K562 (cell line): ENCODE measurements at regions of chr7 and their contacts with region 1.

Region 1: GRCh38 chr7:140673063-140673773 is 473 bp downstream of the ADCK2 start:
- DNase-seq: peak; percentile 62 to 77 (median 70)
- ATAC-seq: peak; percentile 79
- H3K4me3 ChIP-seq: peak overlapping the region; percentile 77
- H3K27ac ChIP-seq: peak overlapping the region; percentile 57; the same call in 2 of the 3 replicates
- H3K4me1 ChIP-seq: peaks cover 24 to 34% of the 10 kb centered on the region in 2 experiments; a peak in 4 of 5 replicates
- H3K27me3 ChIP-seq: no peaks in the 10 kb centered on the region
- CTCF ChIP-seq: no peak; a peak in 1 of 6 replicates
- EP300 ChIP-seq: no peak
- POLR2A ChIP-seq: peak; percentile 48; the same call in 1 of the 2 replicates
- RAD21 ChIP-seq: no peak

Region 2: GRCh38 chr7:140485500-140486265 is 187.5 kb before region 1 on chr7:
- CTCF ChIA-PET with region 1: no interaction called
- POLR2A ChIA-PET with region 1: no interaction called
- in situ Hi-C with region 1: no loop called
- intact Hi-C with region 1: no loop called
- DNase-seq: peak; percentile 59 to 63 (median 60)
- ATAC-seq: peak; percentile 10; the same call in 1 of the 3 replicates
- H3K4me3 ChIP-seq: no peak overlapping the region
- H3K27ac ChIP-seq: no peak overlapping the region
- H3K4me1 ChIP-seq: peaks cover 34 to 41% of the 10 kb centered on the region in 2 experiments
- H3K27me3 ChIP-seq: no peaks in the 10 kb centered on the region
- CTCF ChIP-seq: no peak
- EP300 ChIP-seq: no peak
- POLR2A ChIP-seq: no peak
- RAD21 ChIP-seq: no peak

Region 3: DNA sequence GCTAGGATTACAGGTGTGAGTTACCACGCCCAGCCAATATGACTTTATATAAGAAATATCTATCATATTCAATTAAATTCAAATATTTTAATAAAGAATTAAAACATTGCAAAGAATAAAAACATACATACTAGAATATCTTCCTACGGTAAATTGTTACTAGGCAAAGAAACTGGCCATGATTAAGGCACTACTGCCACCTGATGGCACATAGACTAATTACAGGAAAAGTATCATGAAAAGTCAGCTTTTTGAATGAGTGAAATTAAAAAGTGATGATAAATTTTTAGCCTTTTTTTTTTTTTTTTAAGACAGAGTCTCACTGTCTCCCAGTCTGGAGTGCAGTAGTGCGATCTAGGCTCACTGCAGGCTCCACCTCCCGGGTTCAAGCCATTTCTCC is 310.6 kb after region 1 on chr7:
- CTCF ChIA-PET with region 1: interaction called, 4 read pairs
- POLR2A ChIA-PET with region 1: no interaction called
- in situ Hi-C with region 1: no loop called
- intact Hi-C with region 1: loop called (anchors 10 kb)
- DNase-seq: peak; percentile 52 to 57 (median 54)
- ATAC-seq: no peak
- H3K4me3 ChIP-seq: no peak overlapping the region
- H3K27ac ChIP-seq: no peak overlapping the region
- H3K4me1 ChIP-seq: no peaks in the 10 kb centered on the region
- H3K27me3 ChIP-seq: 0 out of 5 replicates have a peak, but pooled peaks cover 3% of the 10 kb centered on the region in 2 experiments
- CTCF ChIP-seq: peak in 2 of 3 experiments; percentile 46 to 80; a peak in 4 of 6 replicates
- EP300 ChIP-seq: no peak
- POLR2A ChIP-seq: no peak
- RAD21 ChIP-seq: peak; percentile 60 to 80

Region 4: DNA sequence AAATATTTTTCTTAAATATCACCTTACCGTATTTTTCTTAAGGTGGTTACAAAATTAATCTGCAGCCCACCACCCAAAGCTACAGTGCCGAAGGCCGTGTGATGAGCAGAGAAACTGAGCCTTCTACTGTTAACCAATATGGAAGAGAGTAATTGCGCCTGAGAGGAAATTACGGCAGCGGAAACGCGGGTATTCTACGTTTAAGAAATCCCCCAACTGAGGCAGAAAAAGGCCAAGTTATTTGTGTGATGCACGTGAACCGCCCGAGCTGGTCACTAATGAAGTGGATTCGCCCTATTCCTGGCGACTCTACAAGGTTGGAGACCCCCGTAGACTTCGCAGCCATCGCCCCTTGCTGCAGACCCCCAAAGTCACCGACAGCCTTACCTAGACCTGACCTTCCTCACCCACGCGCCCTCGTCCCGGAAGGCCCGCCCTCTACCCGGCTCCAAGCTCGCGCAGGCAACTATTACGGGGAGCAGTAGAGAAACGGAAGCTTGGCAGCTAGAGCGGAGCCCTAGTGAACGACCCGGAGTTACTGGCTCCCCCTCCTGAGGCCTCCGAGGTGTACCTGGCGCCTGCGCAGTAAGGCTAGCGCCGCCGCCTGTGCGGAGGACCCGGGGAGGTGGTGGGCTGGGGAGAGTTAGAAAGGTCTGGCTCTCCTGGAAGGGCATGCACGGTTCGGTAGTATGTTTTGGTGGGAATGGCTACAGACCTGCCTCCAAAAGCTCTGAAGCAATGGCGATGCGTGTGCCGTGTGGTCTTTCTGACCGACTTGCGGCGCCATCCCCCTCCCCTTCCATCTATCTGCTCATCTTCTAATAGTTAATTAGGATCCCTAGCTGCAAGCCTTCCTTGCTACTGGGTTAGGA is 341.5 kb after region 1 on chr7 and contains the start of gene MRPS33:
- CTCF ChIA-PET with region 1: no interaction called
- POLR2A ChIA-PET with region 1: interaction called, 4 read pairs
- in situ Hi-C with region 1: no loop called
- intact Hi-C with region 1: loop called (anchors 1 kb)
- DNase-seq: peak; percentile 99
- ATAC-seq: peak; percentile 99
- H3K4me3 ChIP-seq: peak within 1 kb of the TSS; percentile 53
- H3K27ac ChIP-seq: peak within 1 kb of the TSS; percentile 80
- H3K4me1 ChIP-seq: peaks cover 8 to 21% of the 10 kb centered on the region in 2 experiments; a peak in 2 of 5 replicates
- H3K27me3 ChIP-seq: peaks cover 0 to 2% of the 10 kb centered on the region in 2 experiments; a peak in 1 of 5 replicates
- CTCF ChIP-seq: peak; percentile 92 to 96 (median 96)
- EP300 ChIP-seq: peak; percentile 72
- POLR2A ChIP-seq: peak; percentile 99
- RAD21 ChIP-seq: peak in 1 of 2 experiments; percentile 24; a peak in 1 of 4 replicates
- polyA plus RNA-seq, gene MRPS33: 395 to 442 TPM

Region 5: GRCh38 chr7:141220263-141220880 is 547.2 kb after region 1 on chr7:
- CTCF ChIA-PET with region 1: no interaction called
- POLR2A ChIA-PET with region 1: interaction called, 3 read pairs
- in situ Hi-C with region 1: no loop called
- intact Hi-C with region 1: loop called (anchors 1 kb)
- DNase-seq: peak; percentile 52 to 77 (median 72)
- ATAC-seq: peak; percentile 94
- H3K4me3 ChIP-seq: no peak overlapping the region
- H3K27ac ChIP-seq: no peak overlapping the region
- H3K4me1 ChIP-seq: no peaks in the 10 kb centered on the region
- H3K27me3 ChIP-seq: peaks cover 0 to 18% of the 10 kb centered on the region in 2 experiments; a peak in 3 of 5 replicates
- CTCF ChIP-seq: peak; percentile 51 to 72 (median 66)
- EP300 ChIP-seq: no peak
- POLR2A ChIP-seq: no peak
- RAD21 ChIP-seq: peak in 1 of 2 experiments; percentile 61; a peak in 3 of 4 replicates

Region 6: DNA sequence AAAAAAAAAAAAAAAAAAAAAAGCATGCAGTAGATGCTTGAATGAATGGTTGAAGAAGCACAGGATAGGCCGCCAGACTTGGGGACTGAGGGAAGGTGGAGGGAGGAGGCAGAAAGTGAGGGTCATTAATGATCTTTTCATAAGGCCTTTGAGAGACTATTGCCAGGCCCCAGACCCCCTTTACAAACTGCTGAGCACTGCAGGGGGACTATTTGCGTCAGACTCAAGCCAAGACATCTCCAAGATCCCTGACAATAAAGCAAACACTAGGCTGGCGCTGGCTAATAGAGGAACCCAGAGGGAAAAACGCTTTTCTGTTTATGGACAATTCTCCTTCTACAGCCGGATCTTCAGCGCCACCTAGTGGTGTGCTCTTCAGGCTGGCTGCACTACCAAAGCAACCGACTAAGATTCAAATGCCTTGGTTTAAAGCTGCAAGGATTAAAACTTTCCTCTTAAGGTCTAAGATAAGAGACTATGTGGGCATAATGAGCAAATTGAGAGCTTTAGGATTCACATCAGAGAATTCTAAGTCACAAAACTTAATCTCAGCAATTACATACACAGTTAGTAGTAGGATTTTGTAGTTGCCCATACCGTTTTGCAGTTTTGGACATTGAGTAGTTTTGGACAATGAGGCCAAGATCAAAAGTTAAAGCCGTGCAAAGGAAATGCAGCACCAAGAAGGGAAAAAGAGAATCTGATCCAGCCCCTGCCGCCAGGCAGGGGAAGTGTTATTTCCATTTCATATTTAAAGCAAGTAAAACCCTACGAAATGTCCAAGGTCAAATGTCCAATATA is 860.1 kb after region 1 on chr7:
- CTCF ChIA-PET with region 1: no interaction called
- POLR2A ChIA-PET with region 1: no interaction called
- in situ Hi-C with region 1: no loop called
- intact Hi-C with region 1: loop called (anchors 10 kb)
- DNase-seq: peak; percentile 79 to 83 (median 81)
- ATAC-seq: peak; percentile 96
- H3K4me3 ChIP-seq: no peak overlapping the region
- H3K27ac ChIP-seq: no peak overlapping the region
- H3K4me1 ChIP-seq: no peaks in the 10 kb centered on the region
- H3K27me3 ChIP-seq: peaks cover 10% of the 10 kb centered on the region in 2 experiments
- CTCF ChIP-seq: peak; percentile 90 to 97 (median 97)
- EP300 ChIP-seq: no peak
- POLR2A ChIP-seq: no peak
- RAD21 ChIP-seq: peak; percentile 82 to 91